ENCODE measurements at regions of chr7 and their contacts with region 1.

Region 1: DNA sequence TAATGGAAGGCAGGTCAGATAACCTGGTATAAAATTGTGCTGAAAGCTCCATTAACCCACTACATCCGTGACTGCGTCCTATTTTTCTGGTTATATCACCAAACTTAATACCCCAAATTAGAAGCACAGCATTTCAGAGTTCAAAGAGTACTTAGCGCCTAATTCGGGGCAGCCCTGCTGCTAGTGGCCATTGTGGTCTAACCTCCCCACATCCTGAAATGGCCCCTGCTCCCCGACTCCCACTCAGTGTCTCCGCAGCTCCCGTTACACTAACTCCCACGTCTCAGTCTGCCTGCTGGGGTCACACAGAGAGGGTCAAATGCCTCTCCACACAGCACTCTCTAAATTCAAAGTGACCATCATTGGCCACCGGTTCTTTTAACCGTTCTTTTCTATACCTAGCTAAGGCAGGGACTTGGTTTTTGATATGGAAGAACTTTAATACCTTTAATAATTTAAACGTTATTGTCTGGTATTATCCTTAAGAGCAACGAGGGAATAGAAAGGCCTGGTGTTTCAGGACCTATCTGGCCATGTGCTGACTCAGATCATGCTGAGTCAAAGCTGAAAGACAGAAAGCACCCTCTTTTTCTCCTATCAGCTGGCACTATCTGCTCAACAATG is 117.1 kb downstream of the KMT2E start:
- DNase-seq: peak; percentile 38
- ATAC-seq: peak; percentile 94
- H3K4me3 ChIP-seq: no peak overlapping the region
- H3K27ac ChIP-seq: no peak overlapping the region
- H3K4me1 ChIP-seq: peaks cover 16% of the 10 kb centered on the region
- H3K27me3 ChIP-seq: no peaks in the 10 kb centered on the region
- CTCF ChIP-seq: no peak
- EP300 ChIP-seq: no peak
- POLR2A ChIP-seq: no peak
- RAD21 ChIP-seq: no peak

Region 2: DNA sequence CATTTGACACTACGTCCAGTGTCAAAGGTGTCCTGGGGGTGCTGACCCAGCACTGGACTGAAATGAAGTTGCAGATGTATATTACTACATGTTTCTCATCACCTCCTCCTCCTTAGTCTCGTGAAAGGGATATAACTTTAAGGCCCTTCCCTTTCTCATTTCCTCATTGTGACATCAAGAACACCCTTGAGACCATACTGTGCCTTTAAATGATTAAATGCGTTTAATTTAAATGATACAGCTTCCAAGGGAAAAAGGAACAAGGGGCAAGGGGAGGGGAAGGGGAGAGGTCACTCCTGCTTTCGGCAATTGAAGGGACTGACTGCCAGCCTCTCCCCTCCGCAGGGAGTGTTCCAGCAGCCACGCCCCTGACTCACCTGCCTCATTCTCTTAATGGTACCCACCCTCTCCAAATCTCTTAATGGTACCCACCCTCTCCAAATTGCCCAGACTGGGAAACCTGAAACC is 197.6 kb before region 1 on chr7:
- CTCF ChIA-PET with region 1: no interaction called
- POLR2A ChIA-PET with region 1: no interaction called
- RAD21 ChIA-PET with region 1: no interaction called
- SMC1A ChIA-PET with region 1: no interaction called
- in situ Hi-C with region 1: no loop called
- intact Hi-C with region 1: no loop called
- DNase-seq: no peak
- ATAC-seq: peak; percentile 65
- H3K4me3 ChIP-seq: no peak overlapping the region
- H3K27ac ChIP-seq: no peak overlapping the region
- H3K4me1 ChIP-seq: no peaks in the 10 kb centered on the region
- H3K27me3 ChIP-seq: no peaks in the 10 kb centered on the region
- CTCF ChIP-seq: no peak
- EP300 ChIP-seq: no peak
- POLR2A ChIP-seq: no peak
- RAD21 ChIP-seq: no peak

Region 3: GRCh38 chr7:105118612-105119600 is 12.2 kb before region 1 on chr7:
- CTCF ChIA-PET with region 1: interaction called, 7 read pairs
- POLR2A ChIA-PET with region 1: interaction called, 3 read pairs
- RAD21 ChIA-PET with region 1: interaction called, 6 read pairs
- SMC1A ChIA-PET with region 1: interaction called, 19 read pairs
- in situ Hi-C with region 1: no loop called
- intact Hi-C with region 1: no loop called
- DNase-seq: no peak
- ATAC-seq: peak; percentile 84
- H3K4me3 ChIP-seq: no peak overlapping the region
- H3K27ac ChIP-seq: 0 out of 2 replicates have a peak overlapping the region, but pooled peaks have one; percentile 4
- H3K4me1 ChIP-seq: peaks cover 9% of the 10 kb centered on the region
- H3K27me3 ChIP-seq: no peaks in the 10 kb centered on the region
- CTCF ChIP-seq: no peak
- EP300 ChIP-seq: no peak
- POLR2A ChIP-seq: no peak
- RAD21 ChIP-seq: no peak

Region 4: DNA sequence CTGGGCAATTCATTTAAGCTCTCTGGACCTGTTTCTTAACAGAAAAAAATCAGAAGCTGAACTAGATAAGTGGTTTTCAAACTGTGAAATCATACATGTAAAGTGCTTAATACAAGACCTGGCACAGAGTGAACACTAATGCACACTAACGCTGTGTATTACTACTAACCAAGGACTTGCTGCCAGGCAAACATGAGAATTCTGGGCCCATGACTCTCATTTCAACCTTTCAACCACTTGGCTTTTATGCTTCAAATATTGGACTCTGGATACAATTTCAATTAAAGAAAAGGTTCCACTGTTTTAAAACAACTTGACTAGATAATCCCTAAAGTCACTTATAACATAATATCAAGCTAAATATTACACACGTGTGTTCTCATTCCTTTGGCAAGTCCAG is 184.2 kb after region 1 on chr7:
- CTCF ChIA-PET with region 1: no interaction called
- POLR2A ChIA-PET with region 1: no interaction called
- RAD21 ChIA-PET with region 1: no interaction called
- SMC1A ChIA-PET with region 1: no interaction called
- in situ Hi-C with region 1: no loop called
- intact Hi-C with region 1: no loop called
- DNase-seq: no peak
- ATAC-seq: no peak
- H3K4me3 ChIP-seq: no peak overlapping the region
- H3K27ac ChIP-seq: no peak overlapping the region
- H3K4me1 ChIP-seq: no peaks in the 10 kb centered on the region
- H3K27me3 ChIP-seq: no peaks in the 10 kb centered on the region
- CTCF ChIP-seq: no peak
- EP300 ChIP-seq: no peak
- POLR2A ChIP-seq: no peak
- RAD21 ChIP-seq: no peak